ENCODE measurements at regions of chr5 and their contacts with region 1.

Region 1: DNA sequence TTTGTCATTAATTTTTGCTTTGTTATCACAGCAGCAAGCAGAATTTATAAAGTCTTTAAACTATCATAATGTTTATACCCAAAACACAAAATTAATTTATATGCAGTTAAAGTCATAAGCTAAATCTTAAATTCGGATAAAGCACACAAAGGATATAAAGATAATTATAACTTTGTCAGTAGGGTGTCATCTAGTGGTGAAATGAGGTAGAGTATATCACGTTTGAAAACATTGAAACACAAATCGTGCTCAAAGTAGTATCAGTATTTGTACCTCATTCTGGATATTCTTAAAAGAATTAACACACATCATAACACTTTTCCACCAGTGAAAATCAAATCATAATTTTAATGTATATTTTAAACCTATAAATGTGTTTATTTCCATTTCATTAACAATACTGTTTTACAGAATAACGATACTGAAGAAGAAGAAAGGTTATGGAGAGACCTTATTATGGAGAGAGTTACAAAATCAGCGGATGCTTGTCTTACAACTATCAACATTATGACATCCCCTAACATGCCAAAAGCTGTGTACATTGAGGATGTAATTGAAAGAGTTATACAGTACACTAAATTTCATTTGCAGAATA is 129.5 kb downstream of the NIPBL start:
- DNase-seq: peak; percentile 62
- ATAC-seq: peak; percentile 45; the same call in 1 of the 2 replicates
- H3K4me3 ChIP-seq: no peak overlapping the region
- H3K27ac ChIP-seq: no peak overlapping the region
- H3K4me1 ChIP-seq: no peaks in the 10 kb centered on the region
- H3K27me3 ChIP-seq: no peaks in the 10 kb centered on the region
- CTCF ChIP-seq: peak; percentile 84

Region 2: DNA sequence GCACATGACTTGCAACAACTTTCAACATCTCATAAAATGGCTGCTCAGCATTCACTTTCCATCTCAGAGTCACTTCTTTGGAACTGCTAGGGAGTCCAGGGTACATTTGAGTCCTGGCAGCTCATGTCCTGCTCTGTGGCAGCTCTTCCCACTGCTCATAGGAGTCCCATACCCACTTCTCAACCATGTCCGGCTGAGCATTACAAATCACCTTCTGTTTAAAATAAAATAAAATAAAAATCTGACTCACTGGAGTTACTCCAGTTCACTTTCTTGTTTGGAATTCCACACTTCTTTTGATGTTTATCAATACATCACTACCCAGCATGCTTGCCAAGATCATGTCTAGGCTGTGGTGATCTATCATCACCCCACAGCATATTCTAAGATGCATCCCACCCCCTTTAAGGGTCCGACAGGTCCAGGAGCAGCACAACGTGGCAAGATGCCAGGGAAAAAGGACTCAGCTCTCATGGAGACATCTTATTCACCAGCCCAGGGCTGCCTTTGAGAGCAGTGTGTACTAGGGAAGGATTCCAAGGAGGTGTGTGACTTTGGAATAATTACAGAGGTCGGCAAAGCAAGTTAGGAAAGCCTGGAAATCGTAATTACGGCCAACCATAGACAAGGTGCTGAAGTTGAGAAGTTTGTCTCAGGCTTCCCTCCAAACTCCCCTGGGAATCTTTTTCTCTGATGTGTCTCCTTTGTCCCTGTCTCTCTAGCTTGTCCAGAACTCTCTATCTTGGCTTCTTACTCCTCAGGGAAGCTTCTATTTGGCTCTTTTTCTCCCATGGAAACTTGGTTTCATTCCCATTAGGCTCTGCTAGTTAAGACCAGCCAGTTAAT is 511.1 kb before region 1 on chr5:
- CTCF ChIA-PET with region 1: no interaction called
- POLR2A ChIA-PET with region 1: no interaction called
- intact Hi-C with region 1: no loop called
- DNase-seq: peak; percentile 66
- ATAC-seq: peak; percentile 29
- H3K4me3 ChIP-seq: no peak overlapping the region
- H3K27ac ChIP-seq: peak overlapping the region; percentile 65
- H3K4me1 ChIP-seq: peaks cover 31% of the 10 kb centered on the region
- H3K27me3 ChIP-seq: no peaks in the 10 kb centered on the region
- CTCF ChIP-seq: no peak

Region 3: DNA sequence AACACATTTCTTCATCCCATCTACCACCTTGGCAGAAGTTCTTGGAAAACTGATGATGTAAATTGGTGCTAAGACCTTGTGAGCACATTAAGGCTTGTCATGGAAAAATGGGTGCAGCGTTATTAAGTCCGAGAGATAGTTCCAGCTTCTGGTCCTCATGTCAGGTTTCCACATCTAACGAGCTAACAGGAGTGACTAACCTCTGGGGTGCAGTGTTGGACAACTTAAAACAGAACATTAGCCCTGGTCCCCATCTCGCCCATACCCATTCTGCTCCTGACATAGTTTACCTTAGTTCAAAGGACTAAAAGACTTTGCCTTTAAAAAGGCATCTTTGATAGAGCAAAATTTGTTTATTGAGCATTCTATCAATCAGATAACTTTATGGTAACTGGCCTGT is 271.6 kb before region 1 on chr5:
- CTCF ChIA-PET with region 1: interaction called, 5 read pairs
- POLR2A ChIA-PET with region 1: no interaction called
- intact Hi-C with region 1: loop called (anchors 1 kb)
- DNase-seq: peak; percentile 58
- ATAC-seq: peak; percentile 92
- H3K4me3 ChIP-seq: no peak overlapping the region
- H3K27ac ChIP-seq: no peak overlapping the region
- H3K4me1 ChIP-seq: no peaks in the 10 kb centered on the region
- H3K27me3 ChIP-seq: no peaks in the 10 kb centered on the region
- CTCF ChIP-seq: peak; percentile 62